GM12878 (cell line): ENCODE measurements at regions of chr6 and their contacts with region 1.

Region 1: DNA sequence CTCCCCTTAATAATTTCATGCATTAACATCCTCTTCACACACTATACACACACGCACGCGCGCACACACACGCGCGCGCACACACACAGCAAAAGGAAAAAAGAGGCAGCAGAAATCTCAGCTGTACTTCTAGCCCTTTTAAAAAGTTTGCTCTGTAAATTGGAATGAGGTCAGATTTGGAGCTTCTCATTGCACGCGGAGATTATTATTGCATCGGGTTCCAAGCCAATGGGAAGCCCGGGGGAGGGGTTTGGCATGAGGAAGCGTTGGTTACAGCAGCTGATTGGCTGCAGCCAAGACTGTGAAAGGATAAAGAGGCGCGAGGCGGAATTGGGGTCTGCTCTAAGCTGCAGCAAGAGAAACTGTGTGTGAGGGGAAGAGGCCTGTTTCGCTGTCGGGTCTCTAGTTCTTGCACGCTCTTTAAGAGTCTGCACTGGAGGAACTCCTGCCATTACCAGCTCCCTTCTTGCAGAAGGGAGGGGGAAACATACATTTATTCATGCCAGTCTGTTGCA is at the start of gene SOX4:
- DNase-seq: peak; percentile 88
- ATAC-seq: peak; percentile 73
- H3K4me3 ChIP-seq: peak within 1 kb of the TSS; percentile 88
- H3K27ac ChIP-seq: peak within 1 kb of the TSS; percentile 81
- H3K4me1 ChIP-seq: no peaks in the 10 kb centered on the region
- H3K27me3 ChIP-seq: no peaks in the 10 kb centered on the region
- CTCF ChIP-seq: no peak
- EP300 ChIP-seq: no peak
- POLR2A ChIP-seq: peak; percentile 99
- RAD21 ChIP-seq: 0 out of 2 replicates have a peak, but pooled peaks have one; percentile 1
- polyA plus RNA-seq, gene SOX4: 46.3 to 119 TPM

Region 2: GRCh38 chr6:20708367-20709124 is 884.9 kb before region 1 on chr6:
- CTCF ChIA-PET with region 1: no interaction called
- POLR2A ChIA-PET with region 1: no interaction called
- RAD21 ChIA-PET with region 1: interaction called, 4 read pairs
- SMC1A ChIA-PET with region 1: interaction called, 3 read pairs
- in situ Hi-C with region 1: no loop called
- intact Hi-C with region 1: loop called (anchors 10 kb)
- DNase-seq: peak; percentile 59
- ATAC-seq: peak; percentile 87
- H3K4me3 ChIP-seq: no peak overlapping the region
- H3K27ac ChIP-seq: peak overlapping the region; percentile 20
- H3K4me1 ChIP-seq: peaks cover 13% of the 10 kb centered on the region
- H3K27me3 ChIP-seq: no peaks in the 10 kb centered on the region
- CTCF ChIP-seq: no peak
- EP300 ChIP-seq: peak; percentile 98 to 99
- POLR2A ChIP-seq: no peak
- RAD21 ChIP-seq: no peak

Region 3: GRCh38 chr6:21022343-21023107 is 570.9 kb before region 1 on chr6:
- CTCF ChIA-PET with region 1: interaction called, 3 read pairs
- POLR2A ChIA-PET with region 1: interaction called, 7 read pairs
- RAD21 ChIA-PET with region 1: interaction called, 9 read pairs
- SMC1A ChIA-PET with region 1: interaction called, 6 read pairs
- in situ Hi-C with region 1: loop called (anchors 10 kb)
- intact Hi-C with region 1: loop called (anchors 1 kb)
- DNase-seq: peak; percentile 90
- ATAC-seq: peak; percentile 97
- H3K4me3 ChIP-seq: no peak overlapping the region; the same call in 1 of the 2 replicates
- H3K27ac ChIP-seq: peak overlapping the region; percentile 83
- H3K4me1 ChIP-seq: peaks cover 3% of the 10 kb centered on the region; the same call in 1 of the 2 replicates
- H3K27me3 ChIP-seq: no peaks in the 10 kb centered on the region
- CTCF ChIP-seq: no peak
- EP300 ChIP-seq: peak; percentile 87 to 89
- POLR2A ChIP-seq: peak; percentile 49
- RAD21 ChIP-seq: no peak; the same call in 1 of the 2 replicates

Region 4: DNA sequence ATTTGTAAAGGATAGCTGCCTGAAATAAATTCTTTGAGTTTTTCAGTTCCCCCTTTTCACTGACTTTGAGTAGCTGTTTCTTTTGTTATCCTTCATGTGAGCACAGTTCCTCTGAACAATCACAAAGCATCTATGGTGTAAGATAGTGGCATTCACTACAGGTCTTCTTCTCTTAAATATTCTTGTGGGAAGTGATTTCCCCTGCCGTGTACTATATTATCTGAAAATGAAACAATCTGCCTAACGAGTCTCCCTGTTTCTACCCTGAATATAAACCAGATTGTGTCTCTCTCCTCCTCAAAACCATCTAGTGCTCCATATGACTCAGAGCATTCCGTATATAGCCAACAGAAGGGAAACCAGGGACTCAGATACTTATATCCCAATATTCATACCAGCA is 380.0 kb before region 1 on chr6:
- CTCF ChIA-PET with region 1: no interaction called
- POLR2A ChIA-PET with region 1: no interaction called
- RAD21 ChIA-PET with region 1: interaction called, 3 read pairs
- SMC1A ChIA-PET with region 1: interaction called, 9 read pairs
- in situ Hi-C with region 1: no loop called
- intact Hi-C with region 1: loop called (anchors 5 kb)
- DNase-seq: peak; percentile 84
- ATAC-seq: peak; percentile 77
- H3K4me3 ChIP-seq: 0 out of 2 replicates have a peak overlapping the region, but pooled peaks have one; percentile 47
- H3K27ac ChIP-seq: peak overlapping the region; percentile 74
- H3K4me1 ChIP-seq: peaks cover 42% of the 10 kb centered on the region
- H3K27me3 ChIP-seq: no peaks in the 10 kb centered on the region
- CTCF ChIP-seq: no peak
- EP300 ChIP-seq: peak; percentile 67 to 69; a peak in 2 of 4 replicates
- POLR2A ChIP-seq: no peak
- RAD21 ChIP-seq: no peak

Region 5: DNA sequence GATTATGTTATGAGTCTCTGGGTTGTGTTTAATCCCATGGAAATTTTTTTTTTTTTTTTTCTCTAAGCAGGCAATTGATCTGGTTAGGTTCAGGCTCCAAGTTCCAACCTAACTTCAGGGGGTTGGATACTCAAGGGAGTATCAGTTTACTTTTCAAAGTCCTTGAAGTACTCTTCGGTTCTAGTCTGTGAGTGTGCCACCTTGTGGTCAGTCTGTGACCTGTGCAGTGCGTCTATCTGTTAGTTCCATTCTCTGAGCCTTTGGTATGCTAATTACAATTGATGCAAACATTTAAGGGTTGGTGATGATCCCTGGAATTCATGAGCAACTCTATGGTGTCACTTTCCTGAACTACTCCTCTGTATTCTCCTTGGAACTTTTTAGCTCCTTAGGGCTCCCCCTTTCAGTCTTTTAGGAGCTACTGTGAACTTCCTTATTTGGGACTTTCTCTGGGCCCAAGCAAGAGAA is 342.1 kb after region 1 on chr6:
- CTCF ChIA-PET with region 1: interaction called, 4 read pairs
- POLR2A ChIA-PET with region 1: no interaction called
- RAD21 ChIA-PET with region 1: no interaction called
- SMC1A ChIA-PET with region 1: no interaction called
- in situ Hi-C with region 1: no loop called
- intact Hi-C with region 1: loop called (anchors 5 kb)
- DNase-seq: no peak
- ATAC-seq: peak; percentile 59
- H3K4me3 ChIP-seq: no peak overlapping the region
- H3K27ac ChIP-seq: no peak overlapping the region
- H3K4me1 ChIP-seq: no peaks in the 10 kb centered on the region
- H3K27me3 ChIP-seq: no peaks in the 10 kb centered on the region
- CTCF ChIP-seq: peak; percentile 27 to 64 (median 51)
- EP300 ChIP-seq: no peak
- POLR2A ChIP-seq: no peak
- RAD21 ChIP-seq: peak; percentile 49

Region 6: GRCh38 chr6:22082218-22082617 is 488.7 kb after region 1 on chr6:
- CTCF ChIA-PET with region 1: no interaction called
- POLR2A ChIA-PET with region 1: no interaction called
- RAD21 ChIA-PET with region 1: no interaction called
- SMC1A ChIA-PET with region 1: no interaction called
- in situ Hi-C with region 1: no loop called
- intact Hi-C with region 1: no loop called
- DNase-seq: no peak
- ATAC-seq: peak; percentile 18; the same call in 1 of the 3 replicates
- H3K4me3 ChIP-seq: no peak overlapping the region
- H3K27ac ChIP-seq: no peak overlapping the region
- H3K4me1 ChIP-seq: no peaks in the 10 kb centered on the region; the same call in 1 of the 2 replicates
- H3K27me3 ChIP-seq: no peaks in the 10 kb centered on the region
- CTCF ChIP-seq: no peak
- EP300 ChIP-seq: no peak
- POLR2A ChIP-seq: no peak
- RAD21 ChIP-seq: no peak

Region 7: DNA sequence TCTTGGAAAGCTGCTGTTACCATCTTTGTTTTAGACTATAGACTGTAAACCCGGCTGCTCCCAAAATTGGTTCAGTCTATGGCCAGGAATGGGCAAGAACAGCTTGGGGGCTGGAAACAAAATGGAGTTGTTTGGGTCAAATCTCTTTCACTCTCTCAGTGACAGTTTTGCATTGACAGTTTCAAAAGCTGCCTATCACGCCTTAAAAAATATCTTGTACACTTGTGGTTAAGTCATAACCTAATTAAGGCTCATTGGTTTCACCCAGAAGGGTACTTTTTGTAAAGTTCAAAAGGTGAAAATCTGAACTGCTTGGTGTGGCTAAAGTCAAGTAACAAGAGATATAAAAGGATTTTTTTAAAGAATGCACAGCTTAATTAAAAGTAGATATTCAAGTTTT is 779.5 kb after region 1 on chr6:
- CTCF ChIA-PET with region 1: no interaction called
- POLR2A ChIA-PET with region 1: interaction called, 10 read pairs
- RAD21 ChIA-PET with region 1: no interaction called
- SMC1A ChIA-PET with region 1: no interaction called
- in situ Hi-C with region 1: no loop called
- intact Hi-C with region 1: loop called (anchors 10 kb)
- DNase-seq: peak; percentile 77
- ATAC-seq: peak; percentile 95
- H3K4me3 ChIP-seq: no peak overlapping the region
- H3K27ac ChIP-seq: peak overlapping the region; percentile 88
- H3K4me1 ChIP-seq: peaks cover 31% of the 10 kb centered on the region
- H3K27me3 ChIP-seq: no peaks in the 10 kb centered on the region
- CTCF ChIP-seq: no peak
- EP300 ChIP-seq: peak; percentile 82 to 92
- POLR2A ChIP-seq: no peak
- RAD21 ChIP-seq: 0 out of 2 replicates have a peak, but pooled peaks have one; percentile 17